ENCODE measurements at regions of chr14 and their contacts with region 1.

Region 1: DNA sequence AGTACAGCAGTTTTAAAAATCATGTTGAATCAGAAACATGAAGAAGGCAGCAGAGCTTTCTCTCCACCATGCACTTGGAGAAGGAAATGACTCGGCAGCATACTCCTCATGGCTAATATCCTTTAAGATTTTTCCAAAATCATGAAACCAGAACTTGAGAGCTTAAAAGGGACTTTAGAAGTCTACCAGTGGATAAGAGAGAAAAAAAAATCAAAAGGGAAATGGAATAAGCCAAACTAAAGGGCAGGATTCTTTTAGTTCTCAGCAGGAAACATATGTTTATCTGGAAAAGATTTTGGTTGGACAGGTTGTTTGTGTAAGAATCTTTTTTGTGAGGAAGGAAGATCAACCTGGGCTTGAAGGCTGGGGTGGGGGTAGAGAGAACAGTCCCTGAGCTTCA is 111.8 kb downstream of the PRKCH start:
- DNase-seq: no peak
- H3K4me3 Mint-ChIP-seq: no peak overlapping the region
- H3K27ac Mint-ChIP-seq: no peak overlapping the region
- H3K4me1 Mint-ChIP-seq: peaks cover 84% of the 10 kb centered on the region
- H3K27me3 Mint-ChIP-seq: no peaks in the 10 kb centered on the region

Region 2: GRCh38 chr14:61409776-61410175 is 23.4 kb before region 1 on chr14:
- CTCF ChIA-PET with region 1: no interaction called
- POLR2A ChIA-PET with region 1: no interaction called
- DNase-seq: no peak
- H3K4me3 Mint-ChIP-seq: no peak overlapping the region
- H3K27ac Mint-ChIP-seq: no peak overlapping the region
- H3K4me1 Mint-ChIP-seq: peaks cover 40% of the 10 kb centered on the region
- H3K27me3 Mint-ChIP-seq: no peaks in the 10 kb centered on the region

Region 3: DNA sequence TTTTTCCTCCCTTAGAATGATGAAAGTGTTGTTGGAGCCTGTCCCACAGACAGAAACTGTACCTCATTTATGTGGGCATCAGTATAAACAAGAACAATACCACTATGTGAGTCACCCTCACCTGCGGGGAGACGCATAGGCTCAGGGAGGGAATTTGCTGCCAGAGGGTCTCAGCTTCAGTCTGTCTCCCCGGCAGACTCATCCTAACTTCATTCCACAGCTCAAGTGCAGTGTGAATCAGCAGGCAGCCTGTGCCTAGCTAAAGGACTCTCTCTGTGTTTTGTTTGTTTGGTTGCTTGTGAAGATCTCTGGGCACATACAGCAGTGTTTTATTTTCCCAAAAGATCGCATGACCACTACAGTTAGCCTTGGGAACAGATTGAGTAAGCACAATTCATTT is 12.8 kb before region 1 on chr14:
- CTCF ChIA-PET with region 1: interaction called, 10 read pairs
- POLR2A ChIA-PET with region 1: interaction called, 3 read pairs
- DNase-seq: no peak
- H3K4me3 Mint-ChIP-seq: no peak overlapping the region
- H3K27ac Mint-ChIP-seq: peak overlapping the region; percentile 4
- H3K4me1 Mint-ChIP-seq: peaks cover 20% of the 10 kb centered on the region
- H3K27me3 Mint-ChIP-seq: no peaks in the 10 kb centered on the region

Region 4: DNA sequence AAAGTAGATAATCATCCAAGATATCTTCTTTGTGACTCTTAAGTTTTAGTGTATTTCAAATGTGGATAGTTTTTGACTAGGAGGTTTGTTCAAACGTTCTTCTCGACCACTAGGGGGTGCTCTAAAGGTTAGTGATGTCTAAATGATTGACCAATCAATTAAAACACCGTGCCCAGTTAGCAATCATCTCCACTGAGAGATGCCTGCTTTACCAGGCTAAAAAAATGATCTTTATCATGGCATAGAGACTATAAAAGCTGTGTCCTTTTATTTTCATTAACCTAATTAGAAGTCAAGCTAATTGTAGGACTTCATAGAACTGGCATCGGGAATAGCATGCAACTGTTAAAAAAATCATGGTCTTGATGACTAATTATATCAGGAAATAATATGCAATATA is 42.1 kb after region 1 on chr14:
- CTCF ChIA-PET with region 1: no interaction called
- POLR2A ChIA-PET with region 1: no interaction called
- DNase-seq: no peak
- H3K4me3 Mint-ChIP-seq: no peak overlapping the region
- H3K27ac Mint-ChIP-seq: peak overlapping the region; percentile 89
- H3K4me1 Mint-ChIP-seq: peaks cover 95% of the 10 kb centered on the region
- H3K27me3 Mint-ChIP-seq: no peaks in the 10 kb centered on the region

Region 5: DNA sequence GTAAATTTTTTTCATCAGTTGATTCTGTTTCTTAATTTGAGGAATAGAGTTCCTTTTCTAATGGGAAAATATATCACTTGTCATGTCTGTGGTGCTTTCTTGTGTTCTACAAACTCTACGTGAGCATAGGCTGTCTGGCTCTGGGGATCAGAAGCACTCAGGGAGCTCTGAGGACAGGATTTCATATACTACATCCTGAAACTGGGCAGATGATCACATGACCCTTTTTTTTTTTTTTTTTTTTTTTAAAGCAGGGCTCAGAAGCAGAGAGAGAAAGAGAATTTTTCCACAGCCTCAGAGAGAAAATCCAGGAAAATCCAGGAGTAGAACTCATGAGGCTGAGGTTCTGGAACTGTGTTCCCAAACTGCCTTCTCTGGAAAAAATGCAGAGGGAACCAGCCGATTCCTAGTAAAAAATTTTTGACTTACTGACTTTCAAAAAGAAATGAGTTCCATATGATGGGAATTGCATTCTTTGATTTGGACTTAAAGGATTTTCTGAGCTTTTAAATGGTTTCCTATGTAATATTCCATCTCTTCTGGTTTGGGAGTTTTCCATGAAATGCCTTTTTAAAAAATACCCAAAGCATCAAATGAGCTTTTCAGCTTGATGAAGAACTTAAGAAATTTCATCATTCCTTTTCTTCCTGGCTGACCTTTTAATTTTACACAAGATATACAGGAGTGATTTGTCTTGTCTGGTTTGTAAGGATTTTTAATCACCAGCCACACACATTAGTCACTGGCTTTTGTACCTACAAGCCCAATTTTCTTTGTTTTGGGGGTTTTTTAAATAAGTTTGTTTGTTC is 79.1 kb after region 1 on chr14:
- CTCF ChIA-PET with region 1: no interaction called
- POLR2A ChIA-PET with region 1: no interaction called
- DNase-seq: no peak
- H3K4me3 Mint-ChIP-seq: no peak overlapping the region
- H3K27ac Mint-ChIP-seq: peak overlapping the region; percentile 63
- H3K4me1 Mint-ChIP-seq: peaks cover 82% of the 10 kb centered on the region
- H3K27me3 Mint-ChIP-seq: no peaks in the 10 kb centered on the region

Measured in activated CD4-positive, alpha-beta memory T cell treated with anti-CD3 and anti-CD28 coated beads, Interleukin-2, amount 10 ng/mL, durations not matched to agents 7 days and 5 days (primary cell).